Sciatic nerve (tissue), 2 donors: ENCODE measurements at regions of chr5 and their contacts with region 1.

Region 1: GRCh38 chr5:7668627-7669026 is 182.3 kb downstream of the CFAP90 start:
- DNase-seq: no peak
- ATAC-seq: no peak

Region 2: GRCh38 chr5:7436506-7436905 is 232.1 kb before region 1 on chr5:
- intact Hi-C with region 1: no loop called
- DNase-seq: no peak
- ATAC-seq: no peak

Region 3: DNA sequence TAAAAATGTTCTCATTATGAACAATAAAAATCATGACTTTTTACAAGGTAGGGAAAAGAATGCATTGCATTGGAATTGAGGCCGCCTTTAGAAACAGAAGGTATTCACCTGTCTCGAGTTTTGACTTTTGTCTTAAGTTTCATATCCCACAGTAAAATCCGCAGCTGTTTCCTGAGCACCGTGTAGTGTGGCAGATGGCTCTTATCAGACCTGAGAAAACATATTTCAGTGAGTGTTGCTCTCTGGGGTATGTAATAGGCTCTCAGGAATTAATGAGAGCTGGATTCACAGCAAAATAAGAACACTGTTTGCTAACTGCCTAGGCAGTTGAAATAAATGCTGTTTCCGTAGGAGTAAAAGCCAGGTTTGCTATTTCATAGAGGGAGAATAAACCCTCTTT is 39.1 kb before region 1 on chr5:
- intact Hi-C with region 1: loop called (anchors 1 kb)
- DNase-seq: no peak
- ATAC-seq: no peak